ENCODE measurements at regions of chr1 and their contacts with region 1.

Region 1: GRCh38 chr1:112700290-112701226 is 6.4 kb downstream of the RHOC start:
- DNase-seq: peak; percentile 31 to 80 (median 76)
- ATAC-seq: peak; percentile 64
- H3K4me3 ChIP-seq: no peak overlapping the region
- H3K4me3 Mint-ChIP-seq: peak overlapping the region; percentile 19
- H3K27ac ChIP-seq: peak overlapping the region in 1 of 2 experiments; percentile 83
- H3K27ac Mint-ChIP-seq: peak overlapping the region; percentile 86
- H3K4me1 ChIP-seq: peaks cover 37% of the 10 kb centered on the region
- H3K4me1 Mint-ChIP-seq: peaks cover 53% of the 10 kb centered on the region
- H3K27me3 ChIP-seq: no peaks in the 10 kb centered on the region
- H3K27me3 Mint-ChIP-seq: no peaks in the 10 kb centered on the region
- CTCF ChIP-seq: no peak

Region 2: GRCh38 chr1:112674439-112674985 is 26.0 kb before region 1 on chr1 and contains the start of gene MOV10:
- CTCF ChIA-PET with region 1: interaction called, 5 read pairs
- POLR2A ChIA-PET with region 1: interaction called, 19 read pairs
- intact Hi-C with region 1: loop called in 1 of 2 experiments (anchors 2 kb)
- DNase-seq: peak in 8 of 9 experiments; percentile 34 to 85 (median 62)
- ATAC-seq: peak; percentile 67
- H3K4me3 ChIP-seq: peak within 1 kb of the TSS; percentile 65 to 85
- H3K4me3 Mint-ChIP-seq: peak within 1 kb of the TSS; percentile 93
- H3K27ac ChIP-seq: peak within 1 kb of the TSS; percentile 63 to 75
- H3K27ac Mint-ChIP-seq: peak within 1 kb of the TSS; percentile 94
- H3K4me1 ChIP-seq: peaks cover 24% of the 10 kb centered on the region
- H3K4me1 Mint-ChIP-seq: peaks cover 46% of the 10 kb centered on the region
- H3K27me3 ChIP-seq: no peaks in the 10 kb centered on the region
- H3K27me3 Mint-ChIP-seq: no peaks in the 10 kb centered on the region
- CTCF ChIP-seq: no peak
- total RNA-seq, gene MOV10: 92.4 to 94.7 TPM

Region 3: GRCh38 chr1:113042285-113043143 is 342.0 kb after region 1 on chr1:
- CTCF ChIA-PET with region 1: no interaction called
- POLR2A ChIA-PET with region 1: no interaction called
- intact Hi-C with region 1: no loop called
- DNase-seq: peak in 3 of 9 experiments; percentile 7 to 41 (median 29)
- ATAC-seq: no peak
- H3K4me3 ChIP-seq: no peak overlapping the region
- H3K4me3 Mint-ChIP-seq: no peak overlapping the region
- H3K27ac ChIP-seq: no peak overlapping the region
- H3K27ac Mint-ChIP-seq: peak overlapping the region; percentile 33
- H3K4me1 ChIP-seq: peaks cover 25% of the 10 kb centered on the region
- H3K4me1 Mint-ChIP-seq: peaks cover 31% of the 10 kb centered on the region
- H3K27me3 ChIP-seq: no peaks in the 10 kb centered on the region
- H3K27me3 Mint-ChIP-seq: no peaks in the 10 kb centered on the region
- CTCF ChIP-seq: no peak

Measured in CD8-positive, alpha-beta T cell (primary cell).